Activated CD4-positive, alpha-beta T cell treated with anti-CD3 and anti-CD28 coated beads for 36 hours (primary cell): ENCODE measurements at regions of chr17 and their contacts with region 1.

Region 1: DNA sequence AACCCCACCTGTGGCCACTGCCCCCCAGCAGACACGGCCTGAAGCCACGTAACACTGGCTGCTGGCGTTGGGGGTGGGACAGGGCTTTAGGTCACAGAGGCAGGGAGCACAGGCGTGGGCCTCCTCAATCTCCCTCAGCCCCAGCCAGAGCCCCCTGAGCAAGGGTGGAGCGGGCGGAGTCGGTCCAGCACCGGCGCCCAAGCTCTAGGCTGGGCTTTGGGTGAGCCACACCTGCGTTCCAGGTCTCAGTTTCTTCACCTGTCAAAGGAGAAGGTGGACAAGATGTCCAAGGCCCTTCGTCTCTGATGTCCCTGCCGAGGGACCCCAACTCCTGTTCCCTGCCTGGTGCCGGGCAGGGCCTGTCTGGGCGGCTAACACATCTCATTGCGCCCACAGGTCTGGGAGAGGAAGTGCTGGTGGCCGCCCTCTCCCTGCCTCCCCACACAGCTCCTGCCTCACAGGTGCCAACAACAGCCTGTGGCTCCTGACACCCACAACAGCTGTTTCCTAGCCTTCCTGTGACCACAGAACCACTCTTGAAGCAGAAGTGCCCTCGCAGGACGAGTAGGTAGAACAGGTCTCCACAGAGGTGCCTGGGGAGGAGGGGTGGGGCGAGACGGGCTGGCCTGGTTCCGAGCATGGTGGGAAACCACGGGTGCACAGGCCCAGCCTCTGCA is 12.0 kb downstream of the FAM83G start:
- DNase-seq: peak; percentile 33
- ATAC-seq: peak; percentile 49
- H3K4me3 Mint-ChIP-seq: no peak overlapping the region
- H3K27ac Mint-ChIP-seq: no peak overlapping the region
- H3K4me1 Mint-ChIP-seq: peaks cover 19% of the 10 kb centered on the region
- H3K27me3 Mint-ChIP-seq: no peaks in the 10 kb centered on the region

Region 2: DNA sequence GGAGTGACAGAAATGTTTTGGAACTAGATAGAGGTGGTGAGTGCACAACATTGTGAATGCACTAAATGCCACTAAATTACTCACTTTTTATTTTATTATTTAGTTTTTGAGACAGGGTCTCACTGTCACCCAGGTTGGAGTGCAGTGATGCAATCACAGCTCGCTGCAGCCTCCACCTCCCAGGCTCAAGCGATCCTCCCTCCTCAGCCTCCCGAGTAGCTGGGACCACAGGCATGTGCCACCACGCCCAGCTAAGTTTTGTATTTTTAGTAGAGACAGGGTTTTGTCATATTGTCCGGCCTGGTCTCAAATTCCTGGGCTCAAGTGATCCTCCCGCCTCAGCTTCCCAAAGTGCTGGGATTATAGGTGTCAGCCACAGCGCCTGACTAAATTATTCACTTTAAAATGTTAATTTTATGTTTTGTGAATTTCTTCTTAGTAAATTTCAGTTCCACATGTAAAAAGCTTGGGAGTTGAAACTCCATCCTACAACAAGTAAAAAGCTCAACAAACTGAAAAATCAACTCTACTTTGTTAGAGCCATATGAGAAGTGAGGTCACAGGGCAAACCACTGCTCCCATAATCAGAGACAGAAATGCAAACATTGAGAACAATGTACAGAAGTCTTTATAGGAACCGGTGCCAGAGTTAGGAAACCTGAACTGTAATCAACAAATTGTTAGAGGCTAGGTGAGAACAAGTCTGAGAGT is 54.5 kb before region 1 on chr17:
- CTCF ChIA-PET with region 1: no interaction called
- POLR2A ChIA-PET with region 1: no interaction called
- intact Hi-C with region 1: loop called (anchors 5 to 10 kb)
- DNase-seq: no peak
- ATAC-seq: no peak
- H3K4me3 Mint-ChIP-seq: no peak overlapping the region
- H3K27ac Mint-ChIP-seq: no peak overlapping the region
- H3K4me1 Mint-ChIP-seq: peaks cover 9% of the 10 kb centered on the region
- H3K27me3 Mint-ChIP-seq: no peaks in the 10 kb centered on the region

Region 3: DNA sequence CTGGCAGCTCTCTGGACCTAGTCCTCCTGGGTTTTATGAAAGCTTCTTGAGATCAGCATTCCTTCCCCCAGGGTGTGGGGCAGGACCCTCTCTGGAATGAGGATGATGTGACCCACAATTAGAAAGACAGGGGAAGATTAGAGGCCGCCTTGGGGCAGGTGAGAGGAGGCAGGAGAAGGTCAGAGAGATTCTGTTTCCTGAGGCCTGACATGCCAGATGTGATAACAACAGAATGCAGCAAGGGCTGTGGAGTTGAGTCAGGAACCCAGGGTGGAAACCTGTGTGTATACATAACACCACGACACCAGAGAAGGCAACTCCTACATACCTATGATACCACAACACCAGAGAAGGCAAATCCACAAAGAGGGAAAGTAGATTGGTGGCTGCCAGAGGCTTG is 46.1 kb before region 1 on chr17:
- CTCF ChIA-PET with region 1: no interaction called
- POLR2A ChIA-PET with region 1: no interaction called
- intact Hi-C with region 1: loop called in 1 of 2 experiments (anchors 10 kb)
- DNase-seq: no peak
- ATAC-seq: no peak
- H3K4me3 Mint-ChIP-seq: no peak overlapping the region
- H3K27ac Mint-ChIP-seq: no peak overlapping the region
- H3K4me1 Mint-ChIP-seq: no peaks in the 10 kb centered on the region
- H3K27me3 Mint-ChIP-seq: no peaks in the 10 kb centered on the region

Region 4: DNA sequence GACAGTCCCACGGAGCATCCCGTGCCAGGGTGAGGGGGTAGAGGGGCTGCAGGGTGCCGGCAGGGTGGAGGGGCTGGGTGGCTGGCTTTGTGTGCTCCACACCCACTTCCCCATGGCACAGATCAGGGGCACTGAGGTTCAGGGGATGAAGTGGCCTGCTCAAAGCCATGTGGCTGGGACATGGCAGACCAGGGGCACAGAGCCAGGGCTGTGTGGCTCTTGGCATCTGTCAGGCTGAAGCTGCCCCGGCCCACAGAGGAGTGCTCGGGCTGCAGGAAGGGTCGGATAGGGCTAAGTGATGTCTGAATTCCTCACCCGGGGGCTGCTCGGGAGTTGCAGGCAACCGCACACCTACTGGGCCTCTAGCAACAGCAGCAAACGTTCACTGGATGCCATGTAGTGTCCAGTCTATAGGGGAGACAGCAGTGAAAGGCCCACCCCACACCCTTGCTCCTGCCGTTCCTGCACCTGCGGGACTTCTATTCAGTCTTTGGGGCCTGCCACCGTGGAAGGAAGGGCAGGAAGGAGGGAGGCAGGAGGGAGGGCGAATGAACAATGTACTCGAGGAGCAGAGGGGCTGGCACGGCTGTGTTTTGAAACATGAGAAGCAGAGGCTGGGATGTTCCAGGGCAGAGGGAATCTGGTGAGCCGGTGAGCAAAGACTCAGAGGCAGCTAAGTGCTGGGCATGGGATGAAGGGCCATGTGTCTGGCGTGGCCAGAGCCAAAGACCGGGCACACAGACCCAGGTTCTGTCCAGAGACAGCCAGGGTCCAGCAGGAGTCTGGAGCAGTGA is 25.6 kb before region 1 on chr17:
- CTCF ChIA-PET with region 1: no interaction called
- POLR2A ChIA-PET with region 1: no interaction called
- intact Hi-C with region 1: no loop called
- DNase-seq: no peak
- ATAC-seq: no peak
- H3K4me3 Mint-ChIP-seq: no peak overlapping the region
- H3K27ac Mint-ChIP-seq: no peak overlapping the region
- H3K4me1 Mint-ChIP-seq: peaks cover 12% of the 10 kb centered on the region
- H3K27me3 Mint-ChIP-seq: no peaks in the 10 kb centered on the region

Region 5: GRCh38 chr17:19377602-19378392 is 385.2 kb after region 1 on chr17:
- CTCF ChIA-PET with region 1: no interaction called
- POLR2A ChIA-PET with region 1: no interaction called
- intact Hi-C with region 1: no loop called
- DNase-seq: peak; percentile 97
- ATAC-seq: peak; percentile 96
- H3K4me3 Mint-ChIP-seq: peak overlapping the region; percentile 89
- H3K27ac Mint-ChIP-seq: peak overlapping the region; percentile 98
- H3K4me1 Mint-ChIP-seq: peaks cover 16% of the 10 kb centered on the region
- H3K27me3 Mint-ChIP-seq: no peaks in the 10 kb centered on the region